Spleen (tissue), 13 donors: ENCODE measurements at regions of chr9 and their contacts with region 1.

Region 1: DNA sequence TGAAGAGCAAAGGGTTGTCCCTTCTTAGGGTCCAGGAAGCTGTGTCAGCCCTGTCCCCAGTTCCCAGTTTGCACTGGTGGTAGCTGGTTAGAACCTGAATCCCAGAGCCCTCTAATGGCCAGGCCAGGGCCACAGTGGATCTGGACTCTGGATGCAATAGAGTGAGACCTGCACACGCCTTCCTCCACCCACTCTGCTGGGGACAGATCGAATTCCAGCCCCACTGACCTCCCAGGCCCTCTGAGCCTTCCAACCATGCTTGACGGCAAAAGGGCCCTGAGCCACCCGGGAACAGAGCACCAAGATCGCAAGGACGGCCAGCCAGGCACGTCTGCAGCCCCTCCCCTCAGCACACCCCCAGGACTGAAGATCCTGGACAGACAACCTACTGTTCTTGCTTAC is 23.7 kb downstream of the NAIF1 start:
- DNase-seq: no peak
- H3K4me3 ChIP-seq: no peak overlapping the region
- H3K27ac ChIP-seq: peak overlapping the region in 1 of 8 donors; percentile 7
- H3K4me1 ChIP-seq: no peaks in the 10 kb centered on the region
- H3K27me3 ChIP-seq: no peaks in the 10 kb centered on the region
- CTCF ChIP-seq: no peak
- POLR2A ChIP-seq: no peak

Region 2: DNA sequence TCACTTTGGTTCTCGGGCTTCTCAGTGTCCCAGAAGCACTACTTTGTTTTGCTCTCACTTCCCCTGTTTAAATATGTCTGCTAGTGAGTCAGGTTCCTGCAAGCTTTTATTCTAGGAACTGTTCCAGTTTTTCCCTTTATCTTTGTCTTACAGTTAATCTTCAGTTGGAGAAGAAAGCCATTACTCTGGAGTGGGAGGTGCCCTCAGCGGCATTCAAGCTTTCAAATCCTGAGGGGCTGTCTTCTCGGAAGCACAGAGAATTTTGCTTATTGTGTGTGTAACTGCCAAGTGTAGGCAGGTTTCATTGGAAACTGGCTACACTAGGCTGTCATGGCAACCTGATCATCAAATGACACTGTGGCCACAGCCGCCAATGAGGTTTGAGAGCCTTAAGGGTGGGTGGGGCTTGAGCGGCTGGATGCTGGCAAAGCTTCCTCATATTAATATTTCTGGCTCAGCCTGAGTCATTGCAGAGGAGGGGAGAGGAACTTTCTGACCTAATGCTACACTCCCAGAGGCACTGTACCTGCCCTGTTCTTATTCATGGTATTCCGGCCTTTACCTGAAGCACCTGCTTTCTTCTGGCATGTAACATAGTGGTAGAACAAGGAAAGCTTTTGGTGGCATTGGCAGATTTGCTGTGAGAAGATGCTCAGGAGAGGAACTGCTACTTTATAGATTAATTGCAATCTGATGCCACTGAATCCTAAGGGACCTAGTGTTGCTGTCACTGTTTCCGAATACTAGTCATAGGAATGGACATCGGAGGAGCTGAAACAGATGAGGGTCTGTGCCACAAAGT is 50.9 kb after region 1 on chr9:
- intact Hi-C with region 1: loop called (anchors 10 kb)
- DNase-seq: peak; percentile 89
- H3K4me3 ChIP-seq: peak overlapping the region in 1 of 8 donors; percentile 25
- H3K27ac ChIP-seq: peak overlapping the region; percentile 32 to 91 (median 83)
- H3K4me1 ChIP-seq: peaks cover 47 to 98% (median 92%) of the 10 kb centered on the region in 6 donors
- H3K27me3 ChIP-seq: no peaks in the 10 kb centered on the region
- CTCF ChIP-seq: no peak
- POLR2A ChIP-seq: peak in 1 of 3 donors; percentile 23